Natural killer cell (primary cell): ENCODE measurements at regions of chr4 and their contacts with region 1.

Region 1: DNA sequence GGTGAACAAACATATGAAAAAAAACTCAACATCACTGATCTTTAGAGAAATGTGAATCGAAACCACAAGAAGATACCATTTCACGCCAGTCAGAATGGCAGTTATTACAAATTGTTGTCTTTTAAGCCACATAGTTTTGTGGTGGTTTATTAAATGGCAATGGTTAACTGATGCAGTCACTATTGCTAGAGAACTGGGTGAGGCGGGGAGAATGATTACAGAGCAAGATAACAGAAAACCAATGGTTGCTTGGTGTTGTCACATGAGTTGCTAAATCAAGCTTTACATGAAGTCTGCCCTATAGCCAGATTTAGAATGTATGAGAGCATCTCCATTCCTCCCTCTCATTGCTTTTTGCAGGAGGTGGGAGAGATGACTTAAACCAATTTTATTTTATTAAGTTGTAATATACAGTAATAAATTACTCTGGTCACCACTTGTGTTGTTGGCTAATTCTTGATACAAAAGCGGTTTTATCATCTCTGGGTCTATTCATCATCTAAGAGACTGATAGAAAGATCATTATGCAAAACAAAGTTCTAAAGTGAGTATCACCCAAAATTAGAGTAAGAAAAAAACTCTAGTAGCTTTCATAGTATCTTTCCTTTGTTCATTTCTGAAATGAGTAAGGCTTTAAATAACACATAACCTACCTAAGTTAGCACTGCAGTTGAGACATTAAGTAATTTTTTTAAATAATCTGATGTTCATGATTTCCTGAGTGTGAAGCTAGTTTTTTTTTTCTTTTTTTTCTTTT is 859.5 kb downstream of the STIM2 start:
- DNase-seq: no peak
- ATAC-seq: no peak
- H3K4me3 ChIP-seq: no peak overlapping the region
- H3K4me3 Mint-ChIP-seq: no peak overlapping the region
- H3K27ac ChIP-seq: no peak overlapping the region
- H3K27ac Mint-ChIP-seq: no peak overlapping the region
- H3K4me1 ChIP-seq: no peaks in the 10 kb centered on the region
- H3K4me1 Mint-ChIP-seq: no peaks in the 10 kb centered on the region
- H3K27me3 ChIP-seq: no peaks in the 10 kb centered on the region
- H3K27me3 Mint-ChIP-seq: no peaks in the 10 kb centered on the region
- CTCF ChIP-seq: no peak

Region 2: DNA sequence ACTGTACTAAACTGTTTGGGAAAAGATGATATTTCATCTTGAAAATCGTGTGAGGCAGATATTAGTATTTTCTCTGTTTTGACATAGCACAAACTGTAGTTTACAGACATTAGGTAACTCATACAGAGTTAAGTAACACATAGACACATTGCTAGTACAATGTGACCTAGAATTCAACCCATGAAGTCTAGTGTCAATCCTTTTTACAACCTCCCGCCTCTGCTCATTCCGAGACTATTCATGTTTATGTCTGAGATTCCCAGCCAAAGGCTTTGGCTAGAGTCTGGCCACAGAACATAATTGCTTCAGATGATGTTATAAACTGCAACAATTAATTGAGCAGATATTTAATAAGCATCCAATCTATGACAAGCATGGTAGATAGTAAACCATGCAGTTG is 18.6 kb before region 1 on chr4:
- intact Hi-C with region 1: loop called (anchors 2 kb)
- DNase-seq: no peak
- ATAC-seq: no peak
- H3K4me3 ChIP-seq: no peak overlapping the region
- H3K4me3 Mint-ChIP-seq: no peak overlapping the region
- H3K27ac ChIP-seq: no peak overlapping the region
- H3K27ac Mint-ChIP-seq: no peak overlapping the region
- H3K4me1 ChIP-seq: no peaks in the 10 kb centered on the region
- H3K4me1 Mint-ChIP-seq: no peaks in the 10 kb centered on the region
- H3K27me3 ChIP-seq: no peaks in the 10 kb centered on the region
- H3K27me3 Mint-ChIP-seq: no peaks in the 10 kb centered on the region
- CTCF ChIP-seq: no peak

Region 3: DNA sequence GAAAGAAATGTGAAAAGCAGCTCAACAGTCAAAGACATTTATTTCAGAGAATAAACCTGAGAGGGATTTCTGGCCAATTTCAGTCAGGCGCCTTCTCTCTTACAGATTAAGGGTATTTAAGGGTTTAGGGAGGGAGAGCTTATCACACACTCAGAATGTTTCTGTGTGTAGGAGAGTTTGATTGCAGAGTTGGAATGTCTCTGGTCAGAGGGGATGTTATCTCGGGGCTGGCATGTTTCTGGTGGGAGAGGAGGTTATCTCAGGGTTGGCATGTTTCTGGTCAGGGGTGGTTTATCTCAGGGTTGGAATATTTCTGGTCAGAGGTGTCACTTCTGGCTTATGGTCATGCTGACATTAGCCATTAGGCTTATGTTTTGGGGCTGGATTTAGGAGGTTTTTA is 1079.5 kb after region 1 on chr4:
- intact Hi-C with region 1: no loop called
- DNase-seq: no peak
- ATAC-seq: no peak
- H3K4me3 ChIP-seq: no peak overlapping the region
- H3K4me3 Mint-ChIP-seq: no peak overlapping the region
- H3K27ac ChIP-seq: no peak overlapping the region
- H3K27ac Mint-ChIP-seq: no peak overlapping the region
- H3K4me1 ChIP-seq: no peaks in the 10 kb centered on the region
- H3K4me1 Mint-ChIP-seq: no peaks in the 10 kb centered on the region
- H3K27me3 ChIP-seq: no peaks in the 10 kb centered on the region
- H3K27me3 Mint-ChIP-seq: no peaks in the 10 kb centered on the region
- CTCF ChIP-seq: no peak